Activated CD4-positive, alpha-beta memory T cell treated with anti-CD3 and anti-CD28 coated beads, Interleukin-2, amount 10 ng/mL, durations not matched to agents 7 days and 5 days (primary cell): ENCODE measurements at regions of chr6 and their contacts with region 1.

Region 1: DNA sequence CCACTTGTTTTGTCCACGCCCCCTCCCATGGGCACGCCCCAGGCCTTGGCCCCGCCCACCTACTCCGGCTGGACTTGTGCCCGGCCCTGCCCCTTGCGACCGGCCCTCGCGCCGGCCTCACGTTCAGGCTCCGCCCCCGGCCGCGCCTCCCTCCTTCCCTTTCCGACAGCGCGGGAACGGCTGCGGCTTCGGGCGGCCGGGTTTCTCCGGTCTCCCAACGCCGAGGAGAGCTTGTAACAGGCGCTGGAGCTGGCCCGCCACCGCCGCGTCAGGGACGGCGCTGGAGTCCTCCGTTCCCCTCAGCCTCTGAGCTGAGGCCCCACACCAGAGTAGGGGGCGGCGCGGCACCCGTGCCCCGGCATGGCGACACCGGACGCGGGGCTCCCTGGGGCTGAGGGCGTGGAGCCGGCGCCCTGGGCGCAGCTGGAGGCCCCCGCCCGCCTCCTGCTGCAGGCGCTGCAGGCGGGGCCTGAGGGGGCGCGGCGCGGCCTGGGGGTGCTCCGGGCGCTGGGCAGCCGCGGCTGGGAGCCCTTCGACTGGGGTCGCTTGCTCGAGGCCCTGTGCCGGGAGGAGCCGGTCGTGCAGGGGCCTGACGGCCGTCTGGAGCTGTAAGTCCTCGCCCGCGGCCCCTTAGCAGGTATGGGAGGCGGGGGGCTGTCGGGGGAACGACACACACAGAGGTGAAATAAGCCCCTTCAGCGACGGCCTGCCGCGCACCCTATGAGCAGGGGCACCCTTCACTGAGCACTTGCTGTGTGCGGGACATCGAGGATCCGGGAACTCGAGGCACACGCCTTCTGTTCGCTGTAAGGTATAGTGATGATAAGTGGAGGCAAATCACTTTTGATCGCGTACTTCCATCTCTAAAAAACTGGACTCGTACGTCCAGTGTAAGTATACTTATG is at the start of gene FANCE:
- DNase-seq: peak; percentile 95
- H3K4me3 Mint-ChIP-seq: peak within 1 kb of the TSS; percentile 82
- H3K27ac Mint-ChIP-seq: peak within 1 kb of the TSS; percentile 42
- H3K4me1 Mint-ChIP-seq: peaks cover 38% of the 10 kb centered on the region
- H3K27me3 Mint-ChIP-seq: peaks cover 5% of the 10 kb centered on the region
- total RNA-seq, gene FANCE: 10.3 to 10.4 TPM

Region 2: GRCh38 chr6:35327349-35328027 is 125.0 kb before region 1 on chr6:
- CTCF ChIA-PET with region 1: interaction called, 25 read pairs
- POLR2A ChIA-PET with region 1: interaction called, 5 read pairs
- DNase-seq: peak; percentile 81
- H3K4me3 Mint-ChIP-seq: no peak overlapping the region
- H3K27ac Mint-ChIP-seq: peak overlapping the region; percentile 44
- H3K4me1 Mint-ChIP-seq: peaks cover 24% of the 10 kb centered on the region
- H3K27me3 Mint-ChIP-seq: no peaks in the 10 kb centered on the region

Region 3: DNA sequence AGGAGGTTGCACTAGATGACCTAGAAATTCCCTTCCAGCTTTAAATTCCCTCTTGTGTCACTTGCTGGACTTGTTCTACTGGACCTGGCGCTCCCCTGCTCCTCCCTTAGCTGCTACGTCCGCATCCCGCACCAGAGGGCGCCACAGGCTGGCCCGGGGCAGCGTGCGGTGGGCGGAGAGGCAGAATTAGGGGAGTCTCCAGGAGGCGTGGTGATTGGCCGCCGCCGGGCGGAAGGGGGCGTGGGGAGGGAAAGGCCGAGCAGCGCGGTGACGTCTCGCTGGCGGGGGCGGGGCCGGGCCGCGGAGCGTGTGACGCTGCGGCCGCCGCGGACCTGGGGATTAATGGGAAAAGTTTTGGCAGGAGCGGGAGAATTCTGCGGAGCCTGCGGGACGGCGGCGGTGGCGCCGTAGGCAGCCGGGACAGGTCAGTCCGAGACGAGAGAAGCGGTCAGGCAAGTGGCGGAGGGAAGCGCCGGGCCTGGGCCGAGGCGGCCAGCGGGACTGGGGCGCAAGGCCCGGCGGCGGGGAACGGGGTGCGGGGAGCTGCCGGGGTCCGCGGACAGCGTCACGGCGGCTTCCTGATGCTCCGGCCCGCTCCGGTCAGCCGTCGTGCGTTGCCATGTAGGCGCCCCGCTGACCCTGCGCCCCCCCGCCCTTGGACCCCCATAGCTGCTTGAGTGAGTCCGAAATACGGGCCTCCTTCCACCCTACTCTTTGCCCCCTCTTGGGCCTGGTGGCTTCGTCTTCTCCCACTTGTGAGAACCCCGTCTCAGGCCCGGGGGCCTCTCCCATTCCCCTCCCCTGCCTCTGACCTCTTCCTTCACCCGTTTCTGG is 110.0 kb before region 1 on chr6 and contains the start of gene PPARD:
- CTCF ChIA-PET with region 1: interaction called, 168 read pairs
- POLR2A ChIA-PET with region 1: interaction called, 10 read pairs
- DNase-seq: peak; percentile 98
- H3K4me3 Mint-ChIP-seq: peak within 1 kb of the TSS; percentile 96
- H3K27ac Mint-ChIP-seq: peak within 1 kb of the TSS; percentile 79
- H3K4me1 Mint-ChIP-seq: peaks cover 45% of the 10 kb centered on the region
- H3K27me3 Mint-ChIP-seq: peaks cover 7% of the 10 kb centered on the region
- total RNA-seq, gene PPARD: 23.1 to 23.4 TPM

Region 4: GRCh38 chr6:35415065-35415991 is 37.1 kb before region 1 on chr6:
- CTCF ChIA-PET with region 1: interaction called, 32 read pairs
- POLR2A ChIA-PET with region 1: interaction called, 6 read pairs
- DNase-seq: peak; percentile 40
- H3K4me3 Mint-ChIP-seq: no peak overlapping the region
- H3K27ac Mint-ChIP-seq: peak overlapping the region; percentile 52
- H3K4me1 Mint-ChIP-seq: peaks cover 49% of the 10 kb centered on the region
- H3K27me3 Mint-ChIP-seq: no peaks in the 10 kb centered on the region